ENCODE measurements at regions of chr19 and their contacts with region 1.

Region 1: GRCh38 chr19:54029930-54030490 is 33.7 kb downstream of the VSTM1 start:
- DNase-seq: peak; percentile 28 to 34
- ATAC-seq: peak in 2 of 8 donors; percentile 38 to 49
- H3K4me3 ChIP-seq: no peak overlapping the region
- H3K27ac ChIP-seq: no peak overlapping the region
- H3K4me1 ChIP-seq: peaks cover 0 to 8% (median 0%) of the 10 kb centered on the region in 9 donors
- H3K27me3 ChIP-seq: peaks cover 0 to 30% (median 16%) of the 10 kb centered on the region in 7 donors
- CTCF ChIP-seq: peak in 8 of 9 donors; percentile 35 to 63 (median 57)

Region 2: DNA sequence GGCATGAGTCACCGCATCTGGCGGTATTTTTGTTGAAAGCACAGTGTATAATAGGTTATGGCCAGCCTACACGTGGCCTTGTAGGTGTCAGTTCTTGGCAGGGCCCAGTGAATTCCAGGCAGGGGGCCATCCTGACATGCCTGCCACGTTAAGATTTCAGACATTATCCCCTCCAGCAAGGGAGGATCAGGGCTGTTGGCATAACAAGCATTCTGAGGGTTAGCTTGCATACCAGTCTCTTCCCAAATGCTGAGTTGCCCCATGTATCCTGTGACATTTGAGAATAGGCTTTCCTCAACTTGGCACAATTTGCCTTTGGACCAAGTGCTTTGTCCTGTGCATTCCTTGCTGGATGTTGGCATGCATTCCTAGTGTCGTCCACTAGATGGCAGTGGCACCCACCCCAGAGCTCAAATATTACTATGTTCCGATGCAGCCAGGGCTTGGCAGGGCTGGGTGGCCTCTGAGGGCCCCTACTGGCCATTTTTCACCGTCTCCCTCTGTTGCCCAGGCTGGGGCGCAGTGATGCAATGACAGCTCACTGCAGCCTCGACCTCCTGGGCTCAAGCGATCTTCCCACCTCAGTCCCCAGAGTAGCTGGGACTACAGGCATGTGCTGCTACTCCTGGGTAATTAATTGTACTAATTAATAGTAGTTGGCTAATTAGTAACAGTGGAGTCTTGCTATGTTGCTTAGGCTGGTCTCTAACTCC is 237.1 kb before region 1 on chr19:
- intact Hi-C with region 1: loop called in 1 of 10 experiments (anchors 5 kb)
- DNase-seq: peak; percentile 75 to 84
- ATAC-seq: peak; percentile 95 to 99 (median 96)
- H3K4me3 ChIP-seq: no peak overlapping the region
- H3K27ac ChIP-seq: no peak overlapping the region
- H3K4me1 ChIP-seq: peaks cover 0 to 6% (median 0%) of the 10 kb centered on the region in 9 donors
- H3K27me3 ChIP-seq: no peaks in the 10 kb centered on the region
- CTCF ChIP-seq: peak in 8 of 9 donors; percentile 97 to 100 (median 99)

Region 3: GRCh38 chr19:53808710-53809125 is 221.3 kb before region 1 on chr19:
- intact Hi-C with region 1: loop called in 6 of 10 experiments (anchors 2 to 10 kb)
- DNase-seq: no peak
- ATAC-seq: peak in 6 of 8 donors; percentile 47 to 84 (median 66)
- H3K4me3 ChIP-seq: no peak overlapping the region
- H3K27ac ChIP-seq: no peak overlapping the region
- H3K4me1 ChIP-seq: peaks cover 0 to 10% (median 0%) of the 10 kb centered on the region in 9 donors
- H3K27me3 ChIP-seq: peaks cover 0 to 6% (median 0%) of the 10 kb centered on the region in 7 donors
- CTCF ChIP-seq: peak; percentile 15 to 68 (median 53)

Region 4: DNA sequence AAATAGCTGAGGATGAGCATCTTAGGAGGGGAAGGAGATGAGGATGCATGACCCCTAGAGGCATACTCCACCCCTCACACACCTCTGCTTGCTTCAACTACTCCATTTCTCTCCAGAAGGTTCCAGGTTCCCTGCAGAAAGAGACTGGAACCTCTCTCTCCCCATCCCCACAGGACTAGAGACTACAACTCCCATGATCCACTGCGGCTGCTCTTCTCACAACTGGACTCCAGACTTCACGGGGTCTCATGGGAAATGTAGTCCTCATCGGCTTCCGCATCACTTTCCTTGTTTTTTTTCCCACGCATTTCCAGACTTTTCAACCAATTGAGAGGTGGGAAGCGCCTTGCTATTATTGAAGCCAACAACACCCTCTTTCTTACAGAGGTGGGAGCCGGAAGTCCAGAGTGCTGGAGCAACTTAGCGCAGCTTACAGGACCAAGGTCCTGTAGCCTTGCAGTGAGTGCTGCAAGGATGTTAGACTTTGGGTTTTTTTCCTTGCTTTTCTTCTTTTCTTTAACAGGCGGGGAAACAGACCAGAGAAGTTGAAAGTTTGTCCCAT is 52.5 kb before region 1 on chr19:
- intact Hi-C with region 1: no loop called
- DNase-seq: peak; percentile 44 to 90
- ATAC-seq: peak; percentile 64 to 89 (median 83)
- H3K4me3 ChIP-seq: peak overlapping the region in 9 of 10 donors; percentile 10 to 47 (median 40)
- H3K27ac ChIP-seq: peak overlapping the region in 4 of 10 donors; percentile 5 to 27 (median 24)
- H3K4me1 ChIP-seq: peaks cover 4 to 39% (median 22%) of the 10 kb centered on the region in 9 donors
- H3K27me3 ChIP-seq: peaks cover 7 to 74% (median 67%) of the 10 kb centered on the region in 7 donors
- CTCF ChIP-seq: no peak

Region 5: DNA sequence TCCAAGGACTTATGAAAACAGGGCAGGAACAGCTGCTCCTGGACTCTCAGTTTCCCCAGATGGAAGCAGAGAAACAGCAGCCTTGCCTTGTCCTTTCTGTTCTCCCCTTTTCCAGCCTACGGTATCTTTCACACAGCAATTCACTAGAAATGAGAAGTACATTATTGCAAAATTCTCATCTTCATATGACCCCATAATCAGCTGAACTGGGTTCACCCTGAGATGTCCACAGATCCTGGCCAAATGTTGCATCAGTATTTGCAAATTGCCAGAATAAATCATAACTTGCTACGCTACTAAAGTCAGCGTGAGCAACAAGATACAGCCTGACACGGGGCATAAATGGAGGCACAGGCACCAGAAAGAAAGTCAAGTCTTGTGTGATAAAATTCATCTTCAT is 17.6 kb after region 1 on chr19:
- intact Hi-C with region 1: no loop called
- DNase-seq: no peak
- ATAC-seq: no peak
- H3K4me3 ChIP-seq: no peak overlapping the region
- H3K27ac ChIP-seq: peak overlapping the region in 1 of 10 donors; percentile 41
- H3K4me1 ChIP-seq: peaks cover 0 to 17% (median 0%) of the 10 kb centered on the region in 9 donors
- H3K27me3 ChIP-seq: peaks cover 0 to 59% (median 40%) of the 10 kb centered on the region in 7 donors
- CTCF ChIP-seq: no peak